ENCODE measurements at regions of chr4 and their contacts with region 1.

Region 1: DNA sequence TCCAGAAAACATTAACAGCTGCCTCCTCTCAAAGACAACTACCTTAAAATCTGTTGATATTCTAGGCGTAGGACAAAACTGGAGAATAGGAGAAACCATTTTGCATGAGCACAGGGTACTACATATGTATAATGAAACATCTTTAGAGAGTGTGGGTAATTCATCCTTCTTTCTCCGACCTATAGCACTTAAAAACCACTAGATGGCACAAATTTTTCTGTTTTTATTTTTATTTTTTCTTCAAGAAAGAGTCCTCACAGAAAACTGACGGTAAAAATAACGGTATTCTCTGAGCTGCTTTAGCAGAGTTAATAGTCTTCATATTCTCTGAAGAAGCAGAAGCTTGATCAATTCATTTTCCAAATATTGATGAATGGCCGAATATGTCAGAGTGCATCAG is 14.6 kb downstream of the SMIM31 start:
- DNase-seq: no peak
- H3K4me3 ChIP-seq: no peak overlapping the region
- H3K27ac ChIP-seq: no peak overlapping the region
- H3K4me1 ChIP-seq: no peaks in the 10 kb centered on the region
- H3K27me3 ChIP-seq: no peaks in the 10 kb centered on the region
- CTCF ChIP-seq: peak in 2 of 3 experiments; percentile 10 to 41; a peak in 2 of 4 replicates
- EP300 ChIP-seq: no peak
- POLR2A ChIP-seq: no peak
- RAD21 ChIP-seq: peak; percentile 27 to 28; a peak in 3 of 4 replicates

Region 2: GRCh38 chr4:164648151-164648848 is 120.2 kb before region 1 on chr4:
- CTCF ChIA-PET with region 1: no interaction called
- POLR2A ChIA-PET with region 1: no interaction called
- DNase-seq: no peak
- H3K4me3 ChIP-seq: no peak overlapping the region
- H3K27ac ChIP-seq: no peak overlapping the region
- H3K4me1 ChIP-seq: no peaks in the 10 kb centered on the region
- H3K27me3 ChIP-seq: no peaks in the 10 kb centered on the region
- CTCF ChIP-seq: no peak
- EP300 ChIP-seq: no peak
- POLR2A ChIP-seq: no peak
- RAD21 ChIP-seq: no peak

Region 3: GRCh38 chr4:164731827-164732474 is 36.6 kb before region 1 on chr4:
- CTCF ChIA-PET with region 1: interaction called, 15 read pairs
- POLR2A ChIA-PET with region 1: interaction called, 3 read pairs
- DNase-seq: peak; percentile 17 to 82
- H3K4me3 ChIP-seq: no peak overlapping the region
- H3K27ac ChIP-seq: no peak overlapping the region
- H3K4me1 ChIP-seq: no peaks in the 10 kb centered on the region
- H3K27me3 ChIP-seq: no peaks in the 10 kb centered on the region
- CTCF ChIP-seq: peak; percentile 72 to 88 (median 84)
- EP300 ChIP-seq: no peak
- POLR2A ChIP-seq: no peak
- RAD21 ChIP-seq: peak; percentile 97

Region 4: GRCh38 chr4:164779811-164780216 is 11.3 kb after region 1 on chr4:
- CTCF ChIA-PET with region 1: interaction called, 61 read pairs
- POLR2A ChIA-PET with region 1: no interaction called
- DNase-seq: peak; percentile 10 to 64
- H3K4me3 ChIP-seq: no peak overlapping the region
- H3K27ac ChIP-seq: no peak overlapping the region
- H3K4me1 ChIP-seq: peaks cover 0 to 3% (median 0%) of the 10 kb centered on the region in 4 experiments; a peak in 2 of 7 replicates
- H3K27me3 ChIP-seq: no peaks in the 10 kb centered on the region
- CTCF ChIP-seq: peak in 2 of 3 experiments; percentile 90 to 91; a peak in 3 of 4 replicates
- EP300 ChIP-seq: no peak
- POLR2A ChIP-seq: no peak
- RAD21 ChIP-seq: peak; percentile 94 to 97

Region 5: DNA sequence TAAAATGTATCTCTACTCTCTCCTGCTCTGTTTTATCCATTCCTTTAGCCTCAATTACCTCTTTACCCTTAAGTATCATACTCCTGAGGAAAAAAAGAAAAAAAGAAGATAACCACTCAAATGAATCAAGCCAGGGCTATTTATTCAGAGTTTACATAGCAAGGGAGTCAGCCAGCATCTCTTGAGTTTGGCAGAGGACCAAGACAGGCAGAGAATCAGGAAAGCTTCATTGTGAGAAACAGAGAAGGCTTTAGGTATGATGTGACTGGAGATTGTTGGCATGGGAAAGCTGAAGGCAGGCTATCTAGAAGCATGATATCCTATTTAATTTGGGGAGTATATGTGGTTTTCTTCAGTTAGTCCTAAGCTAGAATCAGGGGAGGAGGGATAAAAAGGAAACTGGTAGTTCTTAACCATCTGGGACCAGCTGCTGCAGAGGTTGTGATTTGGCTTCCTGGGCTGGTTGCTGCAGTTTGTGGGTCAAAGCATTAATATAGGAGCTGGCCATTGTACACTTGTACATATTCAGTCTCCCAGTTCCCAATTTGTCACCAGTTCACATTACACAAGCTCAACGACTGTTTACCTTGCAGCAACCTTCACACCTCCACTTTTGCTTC is 119.7 kb after region 1 on chr4:
- CTCF ChIA-PET with region 1: interaction called, 46 read pairs
- POLR2A ChIA-PET with region 1: interaction called, 11 read pairs
- DNase-seq: no peak
- H3K4me3 ChIP-seq: no peak overlapping the region
- H3K27ac ChIP-seq: no peak overlapping the region
- H3K4me1 ChIP-seq: peaks cover 0 to 6% (median 1%) of the 10 kb centered on the region in 4 experiments; a peak in 2 of 7 replicates
- H3K27me3 ChIP-seq: no peaks in the 10 kb centered on the region
- CTCF ChIP-seq: no peak
- EP300 ChIP-seq: no peak
- POLR2A ChIP-seq: peak in 1 of 2 experiments; percentile 44; a peak in 1 of 3 replicates
- RAD21 ChIP-seq: no peak

Region 6: GRCh38 chr4:164918956-164919355 is 150.4 kb after region 1 on chr4:
- CTCF ChIA-PET with region 1: interaction called, 16 read pairs
- POLR2A ChIA-PET with region 1: no interaction called
- DNase-seq: no peak
- H3K4me3 ChIP-seq: no peak overlapping the region
- H3K27ac ChIP-seq: no peak overlapping the region
- H3K4me1 ChIP-seq: no peaks in the 10 kb centered on the region
- H3K27me3 ChIP-seq: no peaks in the 10 kb centered on the region
- CTCF ChIP-seq: no peak
- EP300 ChIP-seq: no peak
- POLR2A ChIP-seq: no peak
- RAD21 ChIP-seq: no peak

Region 7: DNA sequence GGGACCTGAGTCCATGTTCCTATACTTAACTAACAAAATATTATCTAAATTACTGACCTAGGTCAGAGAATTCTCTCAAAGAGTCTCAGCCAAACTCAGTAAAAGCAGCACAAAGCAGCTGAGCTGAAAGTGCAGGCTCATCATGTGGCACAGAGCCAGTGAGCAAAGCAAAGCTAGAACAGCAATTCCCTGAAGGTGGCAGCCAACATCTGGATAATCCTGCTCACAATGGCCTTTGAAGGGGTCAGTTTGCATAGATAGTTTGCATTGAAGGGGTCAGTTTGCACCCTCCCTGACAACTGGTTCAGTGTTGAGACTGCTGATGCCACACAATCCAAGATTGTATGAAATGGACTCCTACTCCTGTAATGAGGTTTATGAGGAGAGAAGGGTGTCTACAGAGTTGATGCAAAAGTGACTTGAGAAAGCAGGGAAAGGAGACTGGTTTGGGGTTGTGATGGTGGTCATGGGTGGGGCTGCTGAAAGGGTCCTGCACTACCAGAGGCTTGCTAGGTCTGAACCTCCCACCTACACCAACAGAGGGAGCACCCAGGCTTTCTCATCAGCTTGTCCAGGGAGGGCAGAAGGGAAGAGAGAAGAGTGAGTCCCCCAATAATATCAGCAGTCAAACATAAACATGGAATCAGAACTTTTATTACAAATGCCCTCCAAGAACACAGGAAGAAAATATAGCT is 169.2 kb after region 1 on chr4:
- CTCF ChIA-PET with region 1: interaction called, 56 read pairs
- POLR2A ChIA-PET with region 1: no interaction called
- DNase-seq: no peak
- H3K4me3 ChIP-seq: no peak overlapping the region
- H3K27ac ChIP-seq: no peak overlapping the region
- H3K4me1 ChIP-seq: no peaks in the 10 kb centered on the region; a peak in 1 of 7 replicates
- H3K27me3 ChIP-seq: no peaks in the 10 kb centered on the region
- CTCF ChIP-seq: peak; percentile 44 to 67 (median 57)
- EP300 ChIP-seq: no peak
- POLR2A ChIP-seq: no peak
- RAD21 ChIP-seq: peak; percentile 56 to 58

Region 8: GRCh38 chr4:164977243-164978164 is 209.0 kb after region 1 on chr4 and contains the start of gene TRIM61:
- CTCF ChIA-PET with region 1: interaction called, 12 read pairs
- POLR2A ChIA-PET with region 1: no interaction called
- DNase-seq: peak in 1 of 2 experiments; percentile 83
- H3K4me3 ChIP-seq: peak within 1 kb of the TSS in 2 of 4 experiments; percentile 28 to 72; a peak in 3 of 8 replicates
- H3K27ac ChIP-seq: no peak within 1 kb of the TSS
- H3K4me1 ChIP-seq: no peaks in the 10 kb centered on the region
- H3K27me3 ChIP-seq: no peaks in the 10 kb centered on the region
- CTCF ChIP-seq: no peak
- EP300 ChIP-seq: no peak
- POLR2A ChIP-seq: no peak
- RAD21 ChIP-seq: no peak
- total RNA-seq, gene TRIM61: 4.1 and 5.0 TPM in 2 replicates

Measured in H1 (cell line).